ENCODE measurements at regions of chr2 and their contacts with region 1.

Region 1: DNA sequence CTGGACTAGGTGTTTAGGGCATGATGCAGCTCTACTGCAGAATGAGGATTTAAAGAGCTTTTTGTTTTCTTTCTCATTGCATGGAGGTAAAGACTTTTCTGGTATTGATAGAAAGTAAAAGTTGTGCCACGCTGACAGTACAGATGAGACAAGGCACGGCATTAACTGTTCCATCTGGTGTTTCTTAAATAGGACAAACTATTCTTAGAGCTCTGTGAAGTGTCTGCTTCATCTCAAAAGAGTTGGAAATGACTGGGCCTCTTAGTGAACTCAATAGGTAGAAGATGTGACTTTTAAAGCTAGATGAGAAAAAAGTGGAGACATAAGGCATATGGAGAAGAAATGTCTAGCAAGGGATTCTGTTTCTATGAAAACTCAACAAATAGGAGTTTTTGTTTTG is 321.8 kb downstream of the RPRM start:
- DNase-seq: no peak
- ATAC-seq: no peak
- H3K4me3 ChIP-seq: no peak overlapping the region
- H3K4me3 Mint-ChIP-seq: no peak overlapping the region
- H3K27ac ChIP-seq: no peak overlapping the region
- H3K27ac Mint-ChIP-seq: no peak overlapping the region
- H3K4me1 ChIP-seq: no peaks in the 10 kb centered on the region
- H3K4me1 Mint-ChIP-seq: no peaks in the 10 kb centered on the region
- H3K27me3 ChIP-seq: no peaks in the 10 kb centered on the region
- H3K27me3 Mint-ChIP-seq: no peaks in the 10 kb centered on the region
- CTCF ChIP-seq: no peak

Region 2: DNA sequence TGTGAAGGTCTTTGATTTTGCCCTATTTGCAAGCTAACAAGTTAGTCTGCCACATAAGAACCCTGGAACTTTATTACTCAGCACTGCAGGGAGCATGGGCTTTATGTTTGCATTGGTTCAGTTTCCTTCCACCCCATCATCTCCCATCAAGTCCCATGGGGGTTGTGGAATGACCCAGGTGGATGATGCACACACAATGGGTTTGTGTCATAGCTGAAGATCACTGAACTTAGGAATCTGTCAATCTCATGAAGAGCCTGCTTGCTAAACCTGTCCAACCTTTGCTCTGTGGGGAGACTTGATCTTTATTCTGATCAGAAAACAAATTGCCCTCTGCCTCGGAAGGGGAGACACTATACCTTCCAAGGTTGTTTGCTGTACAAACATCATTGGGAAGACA is 56.3 kb after region 1 on chr2:
- CTCF ChIA-PET with region 1: no interaction called
- POLR2A ChIA-PET with region 1: no interaction called
- intact Hi-C with region 1: loop called in 1 of 2 experiments (anchors 2 kb)
- DNase-seq: no peak
- ATAC-seq: no peak
- H3K4me3 ChIP-seq: no peak overlapping the region
- H3K4me3 Mint-ChIP-seq: no peak overlapping the region
- H3K27ac ChIP-seq: no peak overlapping the region
- H3K27ac Mint-ChIP-seq: no peak overlapping the region
- H3K4me1 ChIP-seq: no peaks in the 10 kb centered on the region
- H3K4me1 Mint-ChIP-seq: no peaks in the 10 kb centered on the region
- H3K27me3 ChIP-seq: no peaks in the 10 kb centered on the region
- H3K27me3 Mint-ChIP-seq: no peaks in the 10 kb centered on the region
- CTCF ChIP-seq: no peak